HEK293 (cell line): ENCODE measurements at regions of chr7 and their contacts with region 1.

Region 1: GRCh38 chr7:118009419-118009818 is 136.2 kb upstream of the CTTNBP2 start:
- H3K4me3 ChIP-seq: no peak overlapping the region
- H3K27ac ChIP-seq: no peak overlapping the region
- H3K4me1 ChIP-seq: no peaks in the 10 kb centered on the region
- CTCF ChIP-seq: no peak

Region 2: DNA sequence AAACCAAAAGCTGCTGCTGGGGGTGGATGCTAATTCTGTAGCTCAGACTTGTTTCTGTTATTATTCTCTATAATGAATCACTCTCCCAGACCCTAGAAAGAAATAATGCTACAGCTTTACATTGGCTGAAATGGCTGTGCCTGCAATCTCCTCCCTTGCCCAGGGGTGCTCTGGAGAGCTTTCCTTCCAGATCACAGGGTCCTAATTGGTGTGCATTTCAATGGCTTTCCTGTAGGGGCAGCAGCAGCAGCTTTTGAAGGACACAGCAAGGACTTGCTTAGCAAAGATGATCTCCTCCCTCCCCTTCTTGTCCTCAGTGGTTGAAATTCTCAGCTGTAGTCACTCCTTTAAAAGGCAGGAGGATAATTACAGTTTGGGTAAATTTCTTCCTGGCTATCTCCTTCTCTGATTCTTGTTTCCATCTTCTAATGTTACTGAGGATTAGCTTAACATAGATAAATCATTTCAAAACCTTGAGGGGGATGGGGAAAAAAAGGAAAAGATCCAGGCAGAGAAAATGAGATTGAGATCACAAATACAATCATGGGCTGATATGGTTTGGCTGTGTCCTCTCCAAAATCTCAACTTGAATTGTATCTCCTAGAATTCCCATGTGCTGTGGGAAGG is 15.9 kb before region 1 on chr7:
- CTCF ChIA-PET with region 1: interaction called, 12 read pairs
- POLR2A ChIA-PET with region 1: no interaction called
- H3K4me3 ChIP-seq: no peak overlapping the region
- H3K27ac ChIP-seq: no peak overlapping the region
- H3K4me1 ChIP-seq: no peaks in the 10 kb centered on the region
- CTCF ChIP-seq: peak; percentile 44